ENCODE measurements at regions of chr11 and their contacts with region 1.

Region 1: GRCh38 chr11:88543902-88544655 is 206.5 kb upstream of the CTSC start:
- DNase-seq: peak; percentile 86 to 90
- ATAC-seq: peak; percentile 93
- H3K4me3 ChIP-seq: no peak overlapping the region
- H3K27ac ChIP-seq: no peak overlapping the region
- H3K4me1 ChIP-seq: no peaks in the 10 kb centered on the region
- H3K27me3 ChIP-seq: no peaks in the 10 kb centered on the region

Region 2: DNA sequence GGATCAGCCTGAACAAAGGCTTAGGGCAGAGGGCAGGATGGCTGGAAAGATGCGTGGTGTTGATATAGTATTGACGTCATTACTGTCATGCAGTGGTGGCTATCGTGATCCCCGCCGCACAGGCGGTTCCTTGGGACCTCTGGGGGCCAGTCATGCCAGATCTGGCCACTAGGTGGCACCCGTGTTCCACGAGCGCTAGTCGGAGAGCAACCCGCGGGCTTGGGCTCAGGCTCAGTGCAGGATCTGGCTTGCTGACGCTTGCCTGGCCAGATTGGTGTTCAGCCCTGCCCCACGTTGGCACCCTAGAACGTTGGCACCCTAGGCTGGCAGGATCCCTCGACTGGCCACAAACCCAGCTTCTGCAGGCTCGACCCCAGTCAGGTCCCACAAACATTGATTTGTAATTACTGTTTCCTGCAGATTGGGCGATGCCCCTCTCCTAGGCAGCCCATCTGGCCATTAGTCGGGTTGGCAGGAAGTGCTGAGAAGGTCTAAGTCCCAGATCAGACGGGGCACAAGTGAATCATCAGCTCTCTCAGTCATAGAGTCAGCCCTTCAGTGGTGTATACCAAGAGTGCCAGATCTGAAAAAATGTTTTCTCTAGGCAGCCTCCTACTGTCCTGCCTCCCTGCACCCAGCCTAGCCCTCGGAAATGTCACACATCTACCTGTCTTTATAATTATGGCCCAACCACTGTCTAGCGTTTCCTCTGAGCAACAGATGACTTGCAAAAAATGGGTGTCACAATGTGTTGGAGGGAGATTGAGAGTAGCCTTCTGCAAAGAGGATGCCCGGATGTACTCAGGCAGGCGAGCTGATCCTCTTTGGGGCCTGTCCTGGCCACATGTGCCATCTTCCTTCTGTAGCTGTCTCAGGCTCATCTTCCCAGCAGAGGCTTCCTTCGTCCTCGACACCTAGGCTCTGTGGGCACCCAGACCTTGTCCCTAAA is 1191.0 kb before region 1 on chr11:
- intact Hi-C with region 1: loop called (anchors 10 kb)
- DNase-seq: peak; percentile 92 to 98
- ATAC-seq: peak; percentile 96
- H3K4me3 ChIP-seq: no peak overlapping the region
- H3K27ac ChIP-seq: no peak overlapping the region
- H3K4me1 ChIP-seq: peaks cover 0 to 6% of the 10 kb centered on the region in 2 donors
- H3K27me3 ChIP-seq: no peaks in the 10 kb centered on the region

Region 3: GRCh38 chr11:88016392-88017170 is 527.5 kb before region 1 on chr11:
- intact Hi-C with region 1: loop called in 1 of 2 experiments (anchors 1 kb)
- DNase-seq: peak in 1 of 2 donors; percentile 66
- ATAC-seq: peak; percentile 78
- H3K4me3 ChIP-seq: no peak overlapping the region
- H3K27ac ChIP-seq: no peak overlapping the region
- H3K4me1 ChIP-seq: no peaks in the 10 kb centered on the region
- H3K27me3 ChIP-seq: no peaks in the 10 kb centered on the region

Region 4: GRCh38 chr11:88174709-88175568 is 369.1 kb before region 1 on chr11 and contains the start of gene RAB38:
- intact Hi-C with region 1: loop called in 1 of 2 experiments (anchors 5 kb)
- DNase-seq: peak; percentile 88 to 92
- ATAC-seq: peak; percentile 77
- H3K4me3 ChIP-seq: peak within 1 kb of the TSS in 1 of 2 donors; percentile 56
- H3K27ac ChIP-seq: no peak within 1 kb of the TSS
- H3K4me1 ChIP-seq: no peaks in the 10 kb centered on the region
- H3K27me3 ChIP-seq: no peaks in the 10 kb centered on the region
- total RNA-seq, gene RAB38: 3.9 to 5.1 TPM

Region 5: GRCh38 chr11:88231894-88232482 is 312.1 kb before region 1 on chr11:
- intact Hi-C with region 1: loop called (anchors 2 to 5 kb)
- DNase-seq: no peak
- ATAC-seq: no peak
- H3K4me3 ChIP-seq: no peak overlapping the region
- H3K27ac ChIP-seq: no peak overlapping the region
- H3K4me1 ChIP-seq: no peaks in the 10 kb centered on the region
- H3K27me3 ChIP-seq: no peaks in the 10 kb centered on the region

Region 6: GRCh38 chr11:88447281-88447680 is 96.8 kb before region 1 on chr11:
- intact Hi-C with region 1: no loop called
- DNase-seq: no peak
- ATAC-seq: no peak
- H3K4me3 ChIP-seq: no peak overlapping the region
- H3K27ac ChIP-seq: no peak overlapping the region
- H3K4me1 ChIP-seq: no peaks in the 10 kb centered on the region
- H3K27me3 ChIP-seq: no peaks in the 10 kb centered on the region

Region 7: GRCh38 chr11:88604260-88604659 is 60.2 kb after region 1 on chr11:
- intact Hi-C with region 1: no loop called
- DNase-seq: no peak
- ATAC-seq: peak; percentile 21
- H3K4me3 ChIP-seq: no peak overlapping the region
- H3K27ac ChIP-seq: no peak overlapping the region
- H3K4me1 ChIP-seq: peaks cover 0 to 3% of the 10 kb centered on the region in 2 donors
- H3K27me3 ChIP-seq: no peaks in the 10 kb centered on the region

Measured in aorta (tissue), 5 donors.